ENCODE measurements at regions of chr2 and their contacts with region 1.

Region 1: DNA sequence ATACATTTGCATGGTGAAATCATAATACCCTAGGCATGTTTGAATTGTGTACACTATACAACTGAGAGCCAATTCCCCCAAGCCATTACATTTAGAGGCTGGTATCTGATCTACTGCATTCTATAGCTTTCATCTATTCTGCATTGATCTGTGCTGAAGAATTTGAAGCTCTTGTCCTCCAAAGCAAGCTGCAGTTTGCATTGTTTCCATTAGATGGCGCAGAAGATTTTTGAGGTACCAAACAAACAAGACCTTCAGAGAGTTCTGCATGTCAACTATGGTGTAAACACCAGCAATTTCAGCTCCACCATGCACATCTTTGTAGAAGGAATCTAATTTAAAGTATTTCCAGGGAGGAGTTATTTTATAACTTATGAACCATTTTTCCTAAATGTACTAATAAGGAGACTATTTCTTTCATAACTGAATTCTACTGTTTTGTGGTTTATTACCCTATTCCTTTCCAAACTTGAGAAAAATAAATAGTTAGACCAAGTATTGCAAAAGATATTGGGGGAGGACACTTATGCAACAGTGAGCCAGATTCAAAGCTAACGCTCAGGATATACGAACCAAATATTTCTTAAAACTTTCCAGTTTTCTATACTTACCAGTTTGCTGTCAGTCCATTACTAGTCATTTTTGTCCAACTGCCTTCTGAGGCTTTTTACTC is 761.8 kb upstream of the ACVR2A start:
- DNase-seq: peak; percentile 59
- ATAC-seq: peak; percentile 75
- H3K4me3 Mint-ChIP-seq: no peak overlapping the region
- H3K27ac Mint-ChIP-seq: no peak overlapping the region
- H3K4me1 Mint-ChIP-seq: peaks cover 2% of the 10 kb centered on the region
- H3K27me3 Mint-ChIP-seq: peaks cover 1% of the 10 kb centered on the region

Region 2: GRCh38 chr2:146602383-146602782 is 480.6 kb before region 1 on chr2:
- CTCF ChIA-PET with region 1: no interaction called
- POLR2A ChIA-PET with region 1: no interaction called
- intact Hi-C with region 1: no loop called
- DNase-seq: no peak
- ATAC-seq: no peak
- H3K4me3 Mint-ChIP-seq: no peak overlapping the region
- H3K27ac Mint-ChIP-seq: no peak overlapping the region
- H3K4me1 Mint-ChIP-seq: no peaks in the 10 kb centered on the region
- H3K27me3 Mint-ChIP-seq: no peaks in the 10 kb centered on the region

Region 3: GRCh38 chr2:146931109-146931508 is 151.9 kb before region 1 on chr2:
- CTCF ChIA-PET with region 1: no interaction called
- POLR2A ChIA-PET with region 1: no interaction called
- intact Hi-C with region 1: no loop called
- DNase-seq: no peak
- ATAC-seq: no peak
- H3K4me3 Mint-ChIP-seq: no peak overlapping the region
- H3K27ac Mint-ChIP-seq: no peak overlapping the region
- H3K4me1 Mint-ChIP-seq: no peaks in the 10 kb centered on the region
- H3K27me3 Mint-ChIP-seq: no peaks in the 10 kb centered on the region

Region 4: GRCh38 chr2:147331790-147332419 is 248.9 kb after region 1 on chr2:
- CTCF ChIA-PET with region 1: interaction called, 6 read pairs
- POLR2A ChIA-PET with region 1: interaction called, 4 read pairs
- intact Hi-C with region 1: loop called (anchors 1 to 2 kb)
- DNase-seq: peak; percentile 67
- ATAC-seq: peak; percentile 61
- H3K4me3 Mint-ChIP-seq: no peak overlapping the region
- H3K27ac Mint-ChIP-seq: no peak overlapping the region
- H3K4me1 Mint-ChIP-seq: peaks cover 12% of the 10 kb centered on the region
- H3K27me3 Mint-ChIP-seq: no peaks in the 10 kb centered on the region

Region 5: GRCh38 chr2:147425437-147426029 is 342.5 kb after region 1 on chr2:
- CTCF ChIA-PET with region 1: no interaction called
- POLR2A ChIA-PET with region 1: no interaction called
- intact Hi-C with region 1: no loop called
- DNase-seq: no peak
- ATAC-seq: no peak
- H3K4me3 Mint-ChIP-seq: no peak overlapping the region
- H3K27ac Mint-ChIP-seq: no peak overlapping the region
- H3K4me1 Mint-ChIP-seq: peaks cover 5% of the 10 kb centered on the region
- H3K27me3 Mint-ChIP-seq: no peaks in the 10 kb centered on the region